CD8-positive, alpha-beta T cell (primary cell): ENCODE measurements at regions of chr4 and their contacts with region 1.

Region 1: DNA sequence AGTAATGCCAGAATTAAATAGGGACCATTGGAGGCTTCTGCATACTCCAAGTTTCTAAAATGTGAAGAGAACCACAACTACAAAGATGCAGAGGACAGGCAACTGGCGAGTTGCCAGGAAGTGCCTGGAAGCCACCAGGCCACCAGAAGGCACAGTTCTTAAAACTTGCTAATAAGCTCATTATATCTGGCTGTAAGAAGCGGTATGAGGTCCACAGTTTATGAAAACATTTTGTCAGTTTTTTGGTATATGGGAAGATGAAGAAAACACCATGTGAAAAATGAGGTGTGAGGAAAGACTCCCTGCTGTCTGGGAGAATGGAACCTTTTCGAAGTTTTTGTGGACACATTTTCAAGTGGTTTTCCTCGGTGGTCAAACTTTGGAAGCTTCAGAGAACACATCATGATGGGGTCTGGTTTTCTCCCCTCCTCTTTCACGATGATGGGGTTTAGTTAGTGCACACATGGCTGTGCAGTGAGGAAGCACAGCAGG is 202.7 kb downstream of the NR3C2 start:
- DNase-seq: peak in 4 of 9 experiments; percentile 7 to 51 (median 30)
- ATAC-seq: no peak
- H3K4me3 ChIP-seq: no peak overlapping the region
- H3K4me3 Mint-ChIP-seq: no peak overlapping the region
- H3K27ac ChIP-seq: no peak overlapping the region
- H3K27ac Mint-ChIP-seq: no peak overlapping the region
- H3K4me1 ChIP-seq: no peaks in the 10 kb centered on the region
- H3K4me1 Mint-ChIP-seq: peaks cover 41% of the 10 kb centered on the region
- H3K27me3 ChIP-seq: no peaks in the 10 kb centered on the region
- H3K27me3 Mint-ChIP-seq: no peaks in the 10 kb centered on the region
- CTCF ChIP-seq: no peak

Region 2: DNA sequence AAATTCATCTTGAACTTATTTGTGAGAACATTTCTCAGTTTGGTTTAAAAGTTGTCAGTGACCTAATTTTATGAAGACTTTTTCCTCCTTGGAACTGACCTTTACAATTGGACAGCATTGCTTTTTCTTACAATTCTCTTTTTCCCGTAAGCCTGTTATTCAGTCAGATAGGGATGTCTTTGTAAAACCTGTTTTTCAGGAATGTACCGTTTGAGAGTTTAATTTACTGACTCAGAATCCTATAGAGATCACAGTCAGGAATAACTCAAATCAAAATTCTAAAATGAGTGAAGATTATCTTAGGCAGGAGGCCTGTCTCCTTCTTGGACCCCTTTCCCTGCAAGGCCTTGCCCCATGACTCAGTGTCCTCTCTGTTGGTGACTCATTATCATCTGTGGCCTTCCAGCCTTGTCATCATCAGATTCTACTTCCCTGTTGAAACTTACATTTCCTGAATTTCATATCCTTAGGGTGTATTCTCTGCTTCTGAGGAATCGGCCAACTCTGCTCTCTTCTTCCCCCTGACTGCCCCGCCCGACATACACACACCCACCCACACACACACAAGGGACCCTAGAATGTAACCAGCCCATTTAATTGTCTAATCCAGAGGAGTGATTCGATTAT is 407.9 kb before region 1 on chr4:
- CTCF ChIA-PET with region 1: no interaction called
- POLR2A ChIA-PET with region 1: no interaction called
- intact Hi-C with region 1: no loop called
- DNase-seq: peak in 1 of 9 experiments; percentile 33
- ATAC-seq: no peak
- H3K4me3 ChIP-seq: no peak overlapping the region
- H3K4me3 Mint-ChIP-seq: no peak overlapping the region
- H3K27ac ChIP-seq: no peak overlapping the region
- H3K27ac Mint-ChIP-seq: no peak overlapping the region
- H3K4me1 ChIP-seq: no peaks in the 10 kb centered on the region
- H3K4me1 Mint-ChIP-seq: no peaks in the 10 kb centered on the region
- H3K27me3 ChIP-seq: no peaks in the 10 kb centered on the region
- H3K27me3 Mint-ChIP-seq: no peaks in the 10 kb centered on the region
- CTCF ChIP-seq: no peak

Region 3: GRCh38 chr4:148196164-148196563 is 43.4 kb before region 1 on chr4:
- CTCF ChIA-PET with region 1: no interaction called
- POLR2A ChIA-PET with region 1: no interaction called
- intact Hi-C with region 1: no loop called
- DNase-seq: peak in 1 of 9 experiments; percentile 5
- ATAC-seq: no peak
- H3K4me3 ChIP-seq: no peak overlapping the region
- H3K4me3 Mint-ChIP-seq: no peak overlapping the region
- H3K27ac ChIP-seq: no peak overlapping the region
- H3K27ac Mint-ChIP-seq: no peak overlapping the region
- H3K4me1 ChIP-seq: no peaks in the 10 kb centered on the region
- H3K4me1 Mint-ChIP-seq: peaks cover 4% of the 10 kb centered on the region
- H3K27me3 ChIP-seq: no peaks in the 10 kb centered on the region
- H3K27me3 Mint-ChIP-seq: no peaks in the 10 kb centered on the region
- CTCF ChIP-seq: no peak

Region 4: DNA sequence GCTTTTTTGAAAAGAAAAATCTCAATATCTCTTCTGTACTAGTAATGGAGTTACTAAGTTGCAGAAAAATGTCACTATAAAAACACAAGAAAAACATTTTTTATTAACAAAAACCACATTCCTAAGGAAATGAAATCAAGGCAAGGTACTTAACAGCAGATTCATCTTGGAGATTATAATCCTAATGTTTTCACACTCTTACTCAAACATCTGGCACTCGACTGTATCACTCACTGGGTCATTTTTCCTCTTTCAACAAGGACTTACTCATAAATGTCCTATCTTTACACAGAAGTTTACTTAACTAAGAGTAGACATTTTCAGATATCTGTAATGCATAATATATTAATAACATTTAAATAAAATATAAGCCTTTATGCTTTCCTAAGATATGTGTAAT is 13.9 kb before region 1 on chr4:
- CTCF ChIA-PET with region 1: interaction called, 4 read pairs
- POLR2A ChIA-PET with region 1: interaction called, 6 read pairs
- intact Hi-C with region 1: loop called in 1 of 2 experiments (anchors 2 kb)
- DNase-seq: no peak
- ATAC-seq: no peak
- H3K4me3 ChIP-seq: no peak overlapping the region
- H3K4me3 Mint-ChIP-seq: no peak overlapping the region
- H3K27ac ChIP-seq: no peak overlapping the region
- H3K27ac Mint-ChIP-seq: no peak overlapping the region
- H3K4me1 ChIP-seq: peaks cover 5% of the 10 kb centered on the region
- H3K4me1 Mint-ChIP-seq: peaks cover 34% of the 10 kb centered on the region
- H3K27me3 ChIP-seq: no peaks in the 10 kb centered on the region
- H3K27me3 Mint-ChIP-seq: no peaks in the 10 kb centered on the region
- CTCF ChIP-seq: no peak

Region 5: GRCh38 chr4:148261848-148262247 is 22.3 kb after region 1 on chr4:
- CTCF ChIA-PET with region 1: no interaction called
- POLR2A ChIA-PET with region 1: no interaction called
- intact Hi-C with region 1: no loop called
- DNase-seq: no peak
- ATAC-seq: no peak
- H3K4me3 ChIP-seq: no peak overlapping the region
- H3K4me3 Mint-ChIP-seq: no peak overlapping the region
- H3K27ac ChIP-seq: no peak overlapping the region
- H3K27ac Mint-ChIP-seq: no peak overlapping the region
- H3K4me1 ChIP-seq: peaks cover 6% of the 10 kb centered on the region
- H3K4me1 Mint-ChIP-seq: peaks cover 38% of the 10 kb centered on the region
- H3K27me3 ChIP-seq: no peaks in the 10 kb centered on the region
- H3K27me3 Mint-ChIP-seq: no peaks in the 10 kb centered on the region
- CTCF ChIP-seq: no peak

Region 6: DNA sequence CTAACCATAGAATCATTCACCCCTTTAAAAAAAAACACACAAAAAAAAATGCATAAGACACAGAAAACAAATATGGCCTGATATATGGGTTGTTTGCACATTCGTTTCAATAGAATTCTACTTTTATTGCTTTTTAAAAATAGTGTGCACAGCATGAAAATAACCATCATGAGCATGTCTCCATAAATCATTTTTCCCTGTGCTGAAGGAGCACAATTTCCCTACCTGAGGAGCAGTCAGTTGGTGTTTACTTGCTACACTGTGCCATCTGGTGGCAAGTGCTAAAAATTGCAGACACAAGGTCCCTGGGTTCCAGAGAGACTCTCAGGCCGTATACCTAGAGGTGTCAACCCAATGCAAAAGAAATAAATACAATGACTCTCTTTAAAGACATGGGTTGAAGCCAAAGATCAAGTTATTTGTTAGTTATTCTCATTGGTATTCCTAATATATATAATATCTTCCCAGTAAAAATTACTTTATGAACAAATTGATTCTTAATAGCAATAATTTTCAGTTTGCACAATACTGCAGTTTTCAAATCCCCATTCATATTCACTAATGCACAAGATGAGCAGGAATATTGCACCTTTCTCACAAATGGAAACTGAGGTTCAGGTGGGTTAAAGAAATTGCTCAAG is 1024.7 kb after region 1 on chr4:
- CTCF ChIA-PET with region 1: no interaction called
- POLR2A ChIA-PET with region 1: no interaction called
- intact Hi-C with region 1: no loop called
- DNase-seq: peak in 2 of 9 experiments; percentile 20 to 23
- ATAC-seq: no peak
- H3K4me3 ChIP-seq: no peak overlapping the region
- H3K4me3 Mint-ChIP-seq: no peak overlapping the region
- H3K27ac ChIP-seq: no peak overlapping the region
- H3K27ac Mint-ChIP-seq: no peak overlapping the region
- H3K4me1 ChIP-seq: no peaks in the 10 kb centered on the region
- H3K4me1 Mint-ChIP-seq: no peaks in the 10 kb centered on the region
- H3K27me3 ChIP-seq: no peaks in the 10 kb centered on the region
- H3K27me3 Mint-ChIP-seq: no peaks in the 10 kb centered on the region
- CTCF ChIP-seq: no peak